ENCODE measurements at regions of chr15 and their contacts with region 1.

Region 1: DNA sequence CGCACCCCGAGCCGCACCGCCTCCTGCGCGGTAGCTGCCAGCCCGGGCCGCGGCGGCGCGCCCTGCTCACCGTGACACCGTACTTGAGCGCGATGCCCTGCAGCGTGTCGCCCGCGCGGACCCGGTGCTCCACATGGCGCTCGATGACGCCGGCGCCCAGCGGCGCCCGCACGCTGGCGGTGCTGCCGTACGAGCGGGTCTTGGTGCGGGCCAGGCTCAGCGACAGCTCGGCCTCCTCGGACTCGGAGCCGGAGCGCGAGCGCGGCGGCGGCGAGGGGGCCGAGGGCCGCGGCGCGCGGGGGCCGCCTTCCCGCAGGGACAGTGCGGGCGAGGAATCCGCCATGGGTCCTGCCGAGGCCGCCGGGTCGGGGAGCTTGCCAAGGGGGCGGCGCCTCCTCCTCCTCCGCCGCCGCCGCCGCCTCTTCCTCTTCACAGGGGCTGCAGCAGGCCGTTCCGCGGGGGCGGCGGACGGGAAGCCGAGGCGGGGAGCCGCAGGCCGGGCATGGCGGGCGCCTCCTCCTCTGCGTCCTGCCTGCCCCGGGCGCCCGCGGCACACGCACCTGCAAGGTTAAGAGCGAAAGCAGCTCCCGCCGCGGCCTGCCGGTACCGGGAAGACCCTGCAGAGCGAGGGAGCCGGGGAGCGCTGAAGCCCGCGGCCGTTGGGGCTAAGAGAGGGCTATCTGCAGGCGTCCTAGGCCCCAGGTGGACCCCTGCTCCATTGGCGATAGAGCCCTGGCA is at the start of gene LYSMD2:
- DNase-seq: peak in 1 of 2 donors; percentile 87
- H3K4me3 ChIP-seq: peak within 1 kb of the TSS; percentile 92 to 93
- H3K27ac ChIP-seq: peak within 1 kb of the TSS; percentile 76 to 82
- H3K4me1 ChIP-seq: peaks cover 0 to 1% of the 10 kb centered on the region in 2 donors
- H3K27me3 ChIP-seq: no peaks in the 10 kb centered on the region
- CTCF ChIP-seq: no peak
- total RNA-seq, gene LYSMD2: 45.3 TPM

Region 2: GRCh38 chr15:51750792-51751685 is 13.6 kb after region 1 on chr15 and contains the start of gene TMOD2:
- intact Hi-C with region 1: loop called (anchors 2 kb)
- DNase-seq: peak in 1 of 2 donors; percentile 66
- H3K4me3 ChIP-seq: peak within 1 kb of the TSS; percentile 94 to 98
- H3K27ac ChIP-seq: peak within 1 kb of the TSS in 1 of 2 donors; percentile 67
- H3K4me1 ChIP-seq: peaks cover 0 to 8% of the 10 kb centered on the region in 2 donors
- H3K27me3 ChIP-seq: no peaks in the 10 kb centered on the region
- CTCF ChIP-seq: no peak
- total RNA-seq, gene TMOD2: 7.0 TPM

Region 3: DNA sequence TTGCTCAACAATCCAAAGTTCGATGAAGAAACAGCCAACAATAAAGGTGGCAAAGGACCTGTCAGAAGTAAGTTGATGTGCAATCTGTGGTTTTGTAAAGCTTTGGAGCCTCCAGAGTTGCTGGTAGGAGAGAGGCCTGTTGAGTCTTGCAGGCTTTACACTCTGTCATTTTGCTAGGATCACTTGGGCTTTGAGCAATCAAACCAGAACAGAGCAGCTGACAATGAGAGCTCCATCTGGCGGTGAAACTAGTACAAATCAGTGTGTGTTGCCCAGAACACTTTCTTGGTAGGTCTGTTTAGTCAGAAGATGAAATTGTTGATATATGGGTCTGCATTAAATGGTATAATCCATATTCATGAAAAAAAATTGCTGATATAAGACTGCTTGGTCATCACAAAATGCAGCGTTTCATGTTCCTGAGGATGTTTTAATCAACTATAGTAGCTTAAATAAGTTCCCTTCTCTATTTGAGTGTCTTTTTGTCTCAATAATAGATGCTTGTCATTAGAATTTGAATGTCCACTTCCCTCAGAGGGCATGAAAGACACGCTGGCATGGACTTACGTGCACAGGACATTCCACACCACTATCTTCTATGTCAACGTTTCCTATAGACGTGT is 39.6 kb after region 1 on chr15:
- intact Hi-C with region 1: loop called (anchors 2 kb)
- DNase-seq: peak in 1 of 2 donors; percentile 80
- H3K4me3 ChIP-seq: no peak overlapping the region
- H3K27ac ChIP-seq: no peak overlapping the region
- H3K4me1 ChIP-seq: no peaks in the 10 kb centered on the region
- H3K27me3 ChIP-seq: no peaks in the 10 kb centered on the region
- CTCF ChIP-seq: peak; percentile 2 to 73 (median 60)

Region 4: DNA sequence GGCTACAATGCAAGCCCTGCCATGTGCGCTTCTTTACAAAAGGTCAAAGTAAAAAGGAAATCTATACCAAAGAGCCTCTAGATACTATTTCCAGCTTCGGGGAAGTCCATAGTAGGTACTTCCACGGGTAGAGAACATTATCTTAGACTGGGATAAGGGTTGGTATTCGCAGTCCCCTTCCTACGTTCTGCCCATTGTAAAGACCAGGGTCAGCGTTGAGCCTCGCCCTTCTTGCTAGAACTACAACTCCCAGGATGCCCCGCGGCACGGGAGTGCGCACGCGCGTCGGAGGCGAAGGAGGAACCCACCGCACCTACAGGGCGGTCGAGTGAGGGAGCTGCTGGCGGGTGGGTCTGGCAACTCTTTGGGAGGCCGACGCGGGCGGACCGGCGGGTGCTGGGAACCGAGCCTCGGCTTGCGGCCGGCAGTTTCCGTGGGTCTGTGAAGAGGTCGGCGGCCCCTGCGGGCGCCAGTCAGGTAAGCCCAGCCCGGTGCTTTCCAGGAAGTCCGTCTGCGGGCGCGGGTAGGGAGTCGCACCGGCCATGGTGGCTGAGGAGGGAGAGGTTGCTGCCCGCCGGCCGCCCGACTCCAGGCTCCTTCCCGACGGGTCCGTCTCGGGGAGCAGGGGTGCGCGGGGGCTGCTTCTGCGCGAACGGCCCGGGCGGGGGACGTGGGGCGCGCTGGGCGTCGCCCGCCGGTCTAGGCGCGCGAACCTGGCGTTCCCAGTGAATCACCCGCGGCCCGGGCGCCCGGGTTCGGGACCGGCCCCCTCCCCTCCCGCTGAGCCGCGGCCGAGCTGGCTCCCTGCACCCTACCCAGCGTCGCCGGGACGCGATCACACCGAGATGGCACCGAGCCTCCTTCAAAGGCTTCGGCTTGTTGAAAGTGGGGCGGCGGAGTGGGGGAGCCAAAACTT is 92.2 kb after region 1 on chr15 and contains the start of gene TMOD3:
- intact Hi-C with region 1: loop called (anchors 5 kb)
- DNase-seq: peak; percentile 69 to 94
- H3K4me3 ChIP-seq: peak within 1 kb of the TSS; percentile 89 to 97
- H3K27ac ChIP-seq: peak within 1 kb of the TSS; percentile 84 to 95
- H3K4me1 ChIP-seq: peaks cover 0 to 22% of the 10 kb centered on the region in 2 donors
- H3K27me3 ChIP-seq: no peaks in the 10 kb centered on the region
- CTCF ChIP-seq: no peak
- total RNA-seq, gene TMOD3: 28.0 TPM

Measured in ascending aorta (tissue), 2 donors.